Lower lobe of right lung (tissue), 2 donors: ENCODE measurements at regions of chr3 and their contacts with region 1.

Region 1: GRCh38 chr3:168165390-168166269 is 69.9 kb upstream of the GOLIM4 start:
- DNase-seq: no peak
- ATAC-seq: peak; percentile 68 to 87
- H3K4me3 ChIP-seq: no peak overlapping the region
- H3K27ac ChIP-seq: no peak overlapping the region
- H3K4me1 ChIP-seq: no peaks in the 10 kb centered on the region
- H3K27me3 ChIP-seq: no peaks in the 10 kb centered on the region
- CTCF ChIP-seq: peak; percentile 75

Region 2: GRCh38 chr3:167992381-167992780 is 173.2 kb before region 1 on chr3:
- intact Hi-C with region 1: no loop called
- DNase-seq: no peak
- ATAC-seq: no peak
- H3K4me3 ChIP-seq: no peak overlapping the region
- H3K27ac ChIP-seq: no peak overlapping the region
- H3K4me1 ChIP-seq: no peaks in the 10 kb centered on the region
- H3K27me3 ChIP-seq: no peaks in the 10 kb centered on the region
- CTCF ChIP-seq: no peak

Region 3: DNA sequence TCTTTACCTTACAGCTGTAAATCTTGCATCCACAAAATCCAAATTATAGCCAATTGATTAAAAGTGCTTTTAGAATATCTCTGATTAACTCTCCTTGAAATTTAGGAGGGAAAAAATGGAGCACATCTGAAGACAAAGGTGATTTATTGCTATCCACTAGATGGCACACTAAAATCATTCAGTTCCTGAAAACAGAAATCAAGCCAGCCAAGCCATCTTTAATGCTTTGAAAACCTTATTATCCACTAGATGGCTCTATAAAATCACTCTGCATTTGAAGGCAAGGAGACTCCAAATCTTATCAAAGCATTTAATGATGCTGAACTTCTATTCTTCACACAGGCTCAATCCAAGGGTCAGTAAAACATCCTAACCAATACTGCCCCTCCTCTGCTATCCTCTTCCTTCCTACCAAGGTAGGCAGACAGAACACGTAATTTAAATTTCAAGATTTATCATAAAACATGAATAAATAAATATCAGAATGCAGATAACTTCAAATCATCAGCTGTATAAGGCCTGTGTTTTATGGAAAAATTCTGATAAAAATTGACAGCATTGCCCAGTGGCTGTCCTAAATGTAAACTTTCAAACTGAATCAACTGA is 118.3 kb before region 1 on chr3:
- intact Hi-C with region 1: loop called (anchors 5 kb)
- DNase-seq: no peak
- ATAC-seq: peak; percentile 85 to 87
- H3K4me3 ChIP-seq: no peak overlapping the region
- H3K27ac ChIP-seq: no peak overlapping the region
- H3K4me1 ChIP-seq: peaks cover 8% of the 10 kb centered on the region
- H3K27me3 ChIP-seq: no peaks in the 10 kb centered on the region
- CTCF ChIP-seq: peak; percentile 81

Region 4: GRCh38 chr3:168322941-168323340 is 157.3 kb after region 1 on chr3:
- intact Hi-C with region 1: no loop called
- DNase-seq: no peak
- ATAC-seq: no peak
- H3K4me3 ChIP-seq: no peak overlapping the region
- H3K27ac ChIP-seq: no peak overlapping the region
- H3K4me1 ChIP-seq: no peaks in the 10 kb centered on the region
- H3K27me3 ChIP-seq: no peaks in the 10 kb centered on the region
- CTCF ChIP-seq: no peak